Activated naive CD4-positive, alpha-beta T cell treated with anti-CD3 and anti-CD28 coated beads, Interleukin-2, amount 10 ng/mL, durations not matched to agents 7 days and 5 days (primary cell): ENCODE measurements at regions of chr17 and their contacts with region 1.

Region 1: GRCh38 chr17:48878918-48879898 is 13.4 kb upstream of the ATP5MC1 start:
- DNase-seq: peak; percentile 66
- H3K4me3 Mint-ChIP-seq: no peak overlapping the region
- H3K27ac Mint-ChIP-seq: no peak overlapping the region
- H3K4me1 Mint-ChIP-seq: peaks cover 17% of the 10 kb centered on the region
- H3K27me3 Mint-ChIP-seq: peaks cover 31% of the 10 kb centered on the region

Region 2: GRCh38 chr17:48678141-48678971 is 200.9 kb before region 1 on chr17:
- CTCF ChIA-PET with region 1: interaction called, 51 read pairs
- DNase-seq: peak; percentile 76
- H3K4me3 Mint-ChIP-seq: no peak overlapping the region
- H3K27ac Mint-ChIP-seq: no peak overlapping the region
- H3K4me1 Mint-ChIP-seq: no peaks in the 10 kb centered on the region
- H3K27me3 Mint-ChIP-seq: peaks cover 85% of the 10 kb centered on the region

Region 3: DNA sequence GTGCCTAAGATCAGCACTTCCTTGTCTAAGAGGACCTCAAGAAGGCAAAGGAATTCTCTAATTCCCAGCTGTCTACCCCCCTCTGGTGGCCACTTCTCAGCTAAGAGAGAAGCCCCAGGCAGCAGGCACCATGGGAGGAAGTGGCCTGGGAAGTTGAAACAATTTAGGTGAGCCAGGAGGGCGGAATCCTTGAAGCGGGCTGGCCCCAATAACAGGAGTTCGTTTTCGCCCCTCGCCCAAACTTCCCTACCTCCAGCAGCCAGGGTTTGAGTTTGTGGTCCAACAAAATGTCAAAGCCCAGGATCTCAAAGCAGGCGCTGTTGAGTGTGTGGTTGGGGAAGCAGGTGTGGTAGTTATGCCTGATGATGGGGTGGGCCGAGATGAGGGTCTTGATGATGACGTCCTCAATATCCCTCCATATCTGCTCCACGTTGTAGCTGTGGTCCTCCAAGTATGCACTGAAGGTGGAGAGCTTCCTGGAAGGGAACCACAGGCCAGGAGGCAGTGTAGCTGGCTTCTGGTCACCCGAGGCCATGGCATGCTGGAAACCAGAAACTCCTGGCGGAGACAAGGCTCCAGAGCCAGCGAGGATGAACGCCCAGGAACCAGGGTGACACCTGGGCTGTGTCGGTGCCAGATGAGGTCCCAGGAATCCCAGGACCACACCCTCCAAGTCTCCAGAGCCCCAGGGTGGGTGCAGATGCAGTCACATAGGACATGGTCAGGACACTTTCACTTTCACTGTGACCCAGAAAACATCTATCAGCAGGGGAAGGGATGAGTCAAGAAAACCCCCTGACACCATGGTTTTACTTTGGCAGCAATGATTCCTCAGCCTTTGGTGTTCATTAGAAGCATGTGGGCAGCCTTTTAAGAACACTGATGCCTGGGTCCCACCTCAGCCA is 87.8 kb before region 1 on chr17:
- CTCF ChIA-PET with region 1: interaction called, 16 read pairs
- DNase-seq: peak; percentile 35
- H3K4me3 Mint-ChIP-seq: no peak overlapping the region
- H3K27ac Mint-ChIP-seq: no peak overlapping the region
- H3K4me1 Mint-ChIP-seq: peaks cover 16% of the 10 kb centered on the region
- H3K27me3 Mint-ChIP-seq: peaks cover 91% of the 10 kb centered on the region

Region 4: DNA sequence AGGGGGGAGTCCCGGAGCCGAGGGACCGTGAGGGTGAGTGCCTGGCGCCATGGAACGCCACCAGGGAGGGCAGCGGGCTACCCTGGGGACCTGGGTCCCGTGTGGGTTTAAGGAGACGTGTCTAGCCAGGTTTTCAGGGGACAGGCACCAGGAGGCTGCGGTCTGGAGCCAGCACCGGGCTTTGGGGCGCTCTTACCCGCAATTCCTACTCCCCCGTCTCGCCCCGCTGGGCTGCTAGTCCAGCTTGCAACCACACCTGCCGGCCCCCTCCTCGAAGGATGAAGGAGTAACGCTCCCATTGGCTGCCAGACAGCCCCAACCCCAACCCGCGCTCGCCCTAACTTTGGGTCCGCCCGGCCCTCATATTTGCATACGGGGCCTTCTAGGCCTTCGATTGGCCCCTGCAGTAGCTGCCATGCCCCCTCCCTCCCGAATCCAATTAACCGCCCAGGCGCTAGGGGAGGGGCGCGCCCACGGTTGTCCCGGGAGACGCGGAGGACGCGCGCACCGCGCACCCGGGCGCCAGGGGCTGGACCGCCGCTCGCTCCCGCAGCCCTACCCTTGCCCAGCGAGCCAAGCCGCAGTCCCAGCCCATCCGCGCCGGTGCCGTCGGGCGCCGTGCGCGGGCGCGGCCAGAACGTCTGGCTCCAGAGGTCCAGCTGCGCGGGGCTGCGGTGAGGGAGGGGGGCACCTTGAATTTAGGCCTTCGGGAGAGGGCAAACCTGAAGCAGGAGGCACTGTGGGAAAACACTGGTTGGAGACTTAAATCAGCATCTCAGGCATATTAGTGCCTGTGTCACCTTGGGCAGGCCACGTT is 62.2 kb before region 1 on chr17 and contains the start of gene TTLL6:
- CTCF ChIA-PET with region 1: interaction called, 505 read pairs
- DNase-seq: peak; percentile 93
- H3K4me3 Mint-ChIP-seq: peak within 1 kb of the TSS; percentile 68
- H3K27ac Mint-ChIP-seq: peak within 1 kb of the TSS; percentile 6
- H3K4me1 Mint-ChIP-seq: peaks cover 16% of the 10 kb centered on the region
- H3K27me3 Mint-ChIP-seq: peaks cover 87% of the 10 kb centered on the region

Region 5: GRCh38 chr17:48850792-48851323 is 28.4 kb before region 1 on chr17:
- CTCF ChIA-PET with region 1: interaction called, 31 read pairs
- DNase-seq: no peak
- H3K4me3 Mint-ChIP-seq: no peak overlapping the region
- H3K27ac Mint-ChIP-seq: peak overlapping the region; percentile 53
- H3K4me1 Mint-ChIP-seq: peaks cover 16% of the 10 kb centered on the region
- H3K27me3 Mint-ChIP-seq: no peaks in the 10 kb centered on the region

Region 6: DNA sequence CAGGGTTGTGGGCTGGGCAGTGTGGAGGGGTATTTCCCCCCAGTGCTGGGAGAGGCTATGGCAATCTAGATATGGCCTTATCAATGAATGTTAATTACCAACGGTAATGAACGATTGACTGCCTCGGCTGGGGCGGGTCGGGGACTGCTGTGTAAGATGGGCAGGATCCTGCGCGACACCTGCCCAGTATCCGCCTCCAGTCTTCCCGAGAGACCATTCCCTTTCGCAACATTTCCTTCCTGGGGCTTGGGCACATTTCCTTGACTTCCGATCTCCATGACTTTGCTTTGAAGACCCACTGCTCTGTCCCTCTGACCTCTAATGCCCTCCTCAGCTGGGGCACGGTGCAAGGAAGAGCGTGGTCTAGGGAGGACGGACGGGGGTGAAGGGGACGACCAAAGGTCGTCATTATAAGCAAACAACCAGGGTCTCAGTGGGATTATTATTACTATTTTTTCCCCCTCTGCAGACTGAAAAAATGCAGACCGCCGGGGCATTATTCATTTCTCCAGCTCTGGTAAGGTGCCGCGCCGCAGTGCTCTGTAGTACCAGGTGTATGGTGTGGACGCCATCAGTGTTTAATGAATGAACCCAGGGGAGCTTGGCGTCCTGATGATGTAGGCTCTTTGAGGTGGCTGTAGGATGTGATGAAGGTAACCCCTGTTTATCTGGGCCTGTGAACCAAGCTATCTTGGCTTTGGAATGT is 13.9 kb after region 1 on chr17:
- CTCF ChIA-PET with region 1: interaction called, 10 read pairs
- DNase-seq: peak; percentile 24
- H3K4me3 Mint-ChIP-seq: peak overlapping the region; percentile 85
- H3K27ac Mint-ChIP-seq: peak overlapping the region; percentile 87
- H3K4me1 Mint-ChIP-seq: peaks cover 33% of the 10 kb centered on the region
- H3K27me3 Mint-ChIP-seq: no peaks in the 10 kb centered on the region